T-cell (primary cell): ENCODE measurements at regions of chr10 and their contacts with region 1.

Region 1: DNA sequence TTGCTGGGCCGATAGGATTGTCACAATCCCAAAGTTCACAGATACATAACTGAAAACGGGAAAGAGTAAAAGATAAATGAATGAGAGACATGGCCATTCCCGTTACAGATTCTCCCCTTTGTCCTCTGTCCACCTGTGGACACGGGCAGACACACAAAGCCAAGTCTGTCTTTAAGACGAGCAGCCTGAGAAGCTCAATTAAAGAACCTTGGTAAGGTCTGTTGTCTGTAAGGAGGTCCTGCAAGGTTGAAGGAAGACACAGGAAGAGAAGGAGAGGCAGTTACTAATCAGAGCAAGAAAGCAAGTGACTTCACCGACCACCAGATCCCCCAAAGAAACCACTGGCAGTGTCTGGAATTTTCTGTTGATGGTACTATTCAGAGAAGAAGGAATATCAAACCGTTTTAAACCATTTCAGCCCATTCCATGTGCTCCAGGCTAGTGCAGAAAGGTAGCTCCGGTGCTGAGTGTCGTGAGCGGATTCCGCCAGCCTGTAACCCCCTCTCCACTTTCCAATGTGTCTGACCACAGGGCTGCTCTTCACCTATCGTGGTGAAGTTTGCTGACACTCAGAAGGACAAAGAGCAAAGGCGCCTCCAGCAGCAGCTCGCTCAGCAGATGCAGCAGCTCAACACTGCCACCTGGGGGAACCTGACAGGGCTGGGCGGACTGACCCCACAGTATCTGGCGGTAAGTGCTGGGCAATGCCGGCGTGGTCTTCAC is 252.6 kb downstream of the CELF2 start:
- DNase-seq: peak; percentile 27 to 79 (median 63)
- ATAC-seq: peak; percentile 75 to 76 (median 76)
- H3K4me3 ChIP-seq: no peak overlapping the region
- H3K4me3 Mint-ChIP-seq: no peak overlapping the region
- H3K27ac ChIP-seq: no peak overlapping the region
- H3K27ac Mint-ChIP-seq: peak overlapping the region; percentile 59 to 80
- H3K4me1 ChIP-seq: peaks cover 3 to 18% of the 10 kb centered on the region in 2 experiments
- H3K4me1 Mint-ChIP-seq: peaks cover 51 to 75% (median 71%) of the 10 kb centered on the region in 3 donors
- H3K27me3 ChIP-seq: no peaks in the 10 kb centered on the region
- H3K27me3 Mint-ChIP-seq: no peaks in the 10 kb centered on the region

Region 2: DNA sequence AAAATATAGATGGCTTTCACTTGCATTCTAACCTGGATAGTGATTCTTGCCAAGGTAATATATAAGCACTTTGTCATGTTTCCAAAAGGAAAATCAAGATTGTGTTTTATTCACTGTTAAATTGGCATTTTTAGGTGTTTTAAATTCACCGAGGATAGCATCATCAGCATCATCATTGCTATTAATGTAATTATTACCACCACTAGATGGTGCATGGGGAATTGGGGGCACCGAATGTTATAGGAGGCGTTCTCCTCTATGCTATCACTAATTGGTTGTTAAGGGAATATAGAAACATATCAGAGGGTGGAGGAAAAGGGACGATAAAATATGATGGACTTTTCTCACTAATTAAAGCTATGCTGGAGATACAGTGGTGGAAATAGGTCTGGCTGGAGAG is 157.1 kb before region 1 on chr10:
- CTCF ChIA-PET with region 1: interaction called, 4 to 33 read pairs
- POLR2A ChIA-PET with region 1: no interaction called
- DNase-seq: peak in 26 of 35 experiments; percentile 7 to 77 (median 27)
- ATAC-seq: peak; percentile 56 to 96 (median 82)
- H3K4me3 ChIP-seq: no peak overlapping the region
- H3K4me3 Mint-ChIP-seq: peak overlapping the region in 1 of 3 donors; percentile 37
- H3K27ac ChIP-seq: no peak overlapping the region
- H3K27ac Mint-ChIP-seq: peak overlapping the region in 1 of 2 donors; percentile 82
- H3K4me1 ChIP-seq: peaks cover 7 to 8% of the 10 kb centered on the region in 2 experiments
- H3K4me1 Mint-ChIP-seq: peaks cover 24 to 40% (median 28%) of the 10 kb centered on the region in 3 donors
- H3K27me3 ChIP-seq: no peaks in the 10 kb centered on the region
- H3K27me3 Mint-ChIP-seq: no peaks in the 10 kb centered on the region